ENCODE measurements at regions of chr2 and their contacts with region 1.

Region 1: GRCh38 chr2:27133905-27134780 is at the start of gene PREB:
- DNase-seq: peak; percentile 91
- ATAC-seq: peak; percentile 83
- H3K4me3 ChIP-seq: peak within 1 kb of the TSS; percentile 92 to 100 (median 96)
- H3K27ac ChIP-seq: peak within 1 kb of the TSS; percentile 72
- H3K4me1 ChIP-seq: peaks cover 52% of the 10 kb centered on the region
- H3K27me3 ChIP-seq: peaks cover 6 to 14% of the 10 kb centered on the region in 2 experiments; a peak in 3 of 5 replicates
- CTCF ChIP-seq: peak; percentile 34
- EP300 ChIP-seq: 0 out of 4 replicates have a peak, but pooled peaks have one; percentile 7 to 26
- POLR2A ChIP-seq: peak; percentile 85 to 97
- RAD21 ChIP-seq: peak; percentile 55
- total RNA-seq, gene PREB: 112 and 119 TPM in 2 replicates

Region 2: DNA sequence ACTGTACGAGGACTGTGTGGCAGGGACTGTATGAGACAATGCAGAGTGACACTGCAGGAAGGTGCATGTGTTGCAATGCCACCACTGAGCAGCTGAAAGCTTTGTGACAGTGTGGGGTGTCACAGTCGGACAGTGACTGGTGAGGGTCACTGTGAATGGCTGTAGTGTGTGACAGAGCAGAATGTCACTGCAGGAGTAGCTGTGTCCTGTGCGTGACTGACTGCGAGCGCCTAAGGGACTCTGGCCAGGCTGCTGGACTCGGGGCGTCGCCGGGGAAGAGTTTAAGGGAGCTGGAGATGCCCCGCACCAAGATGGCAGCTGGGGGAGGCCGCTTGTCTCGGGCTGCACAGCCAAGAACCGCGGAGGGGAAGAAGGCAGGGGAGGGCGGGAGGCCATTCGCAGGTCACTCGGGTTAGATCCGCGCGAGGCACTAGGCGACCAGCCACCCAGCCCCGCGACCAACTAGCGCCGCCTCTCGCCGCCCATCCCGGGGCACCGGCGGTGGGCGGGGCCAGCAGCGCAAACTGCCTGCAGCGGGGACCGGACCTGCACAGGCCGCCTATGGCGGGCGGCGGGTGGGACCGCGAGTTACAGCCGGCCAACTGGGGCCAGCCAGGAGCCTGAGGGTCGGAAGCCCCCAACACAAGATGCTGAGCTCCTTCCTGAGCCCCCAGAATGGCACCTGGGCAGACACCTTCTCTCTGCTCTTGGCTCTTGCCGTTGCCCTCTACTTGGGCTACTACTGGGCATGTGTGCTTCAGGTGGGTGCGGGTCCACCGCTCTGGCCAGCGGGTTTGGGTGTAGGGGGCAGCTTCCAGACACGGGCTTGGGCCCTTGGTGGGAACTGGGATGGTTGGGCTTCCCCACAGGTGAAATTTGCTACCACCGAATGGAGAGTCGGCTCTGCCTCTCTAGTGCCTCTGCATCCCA is 10.6 kb before region 1 on chr2 and contains the start of gene ABHD1:
- CTCF ChIA-PET with region 1: no interaction called
- POLR2A ChIA-PET with region 1: interaction called, 76 read pairs
- in situ Hi-C with region 1: no loop called
- intact Hi-C with region 1: loop called (anchors 1 kb)
- DNase-seq: peak; percentile 59
- ATAC-seq: peak; percentile 78
- H3K4me3 ChIP-seq: peak within 1 kb of the TSS; percentile 46 to 80 (median 62)
- H3K27ac ChIP-seq: no peak within 1 kb of the TSS
- H3K4me1 ChIP-seq: peaks cover 60% of the 10 kb centered on the region
- H3K27me3 ChIP-seq: peaks cover 2 to 42% of the 10 kb centered on the region in 2 experiments; a peak in 4 of 5 replicates
- CTCF ChIP-seq: peak; percentile 73
- EP300 ChIP-seq: no peak
- POLR2A ChIP-seq: peak; percentile 27 to 90
- RAD21 ChIP-seq: 0 out of 2 replicates have a peak, but pooled peaks have one; percentile 45
- total RNA-seq, gene ABHD1: 0.04 TPM in 1 of 2 replicates, not detected in the other

Region 3: GRCh38 chr2:27152786-27153510 is 18.8 kb after region 1 on chr2:
- CTCF ChIA-PET with region 1: no interaction called
- POLR2A ChIA-PET with region 1: interaction called, 13 read pairs
- in situ Hi-C with region 1: no loop called
- intact Hi-C with region 1: no loop called
- DNase-seq: no peak
- ATAC-seq: no peak
- H3K4me3 ChIP-seq: no peak overlapping the region
- H3K27ac ChIP-seq: no peak overlapping the region
- H3K4me1 ChIP-seq: peaks cover 69% of the 10 kb centered on the region
- H3K27me3 ChIP-seq: peaks cover 0 to 2% of the 10 kb centered on the region in 2 experiments; a peak in 2 of 5 replicates
- CTCF ChIP-seq: no peak
- EP300 ChIP-seq: no peak
- POLR2A ChIP-seq: no peak
- RAD21 ChIP-seq: no peak

Region 4: GRCh38 chr2:27174316-27175040 is 40.3 kb after region 1 on chr2:
- CTCF ChIA-PET with region 1: no interaction called
- POLR2A ChIA-PET with region 1: interaction called, 19 read pairs
- in situ Hi-C with region 1: no loop called
- intact Hi-C with region 1: no loop called
- DNase-seq: no peak
- ATAC-seq: no peak
- H3K4me3 ChIP-seq: no peak overlapping the region
- H3K27ac ChIP-seq: peak overlapping the region; percentile 43
- H3K4me1 ChIP-seq: peaks cover 98% of the 10 kb centered on the region
- H3K27me3 ChIP-seq: no peaks in the 10 kb centered on the region
- CTCF ChIP-seq: no peak
- EP300 ChIP-seq: no peak
- POLR2A ChIP-seq: no peak
- RAD21 ChIP-seq: no peak

Region 5: DNA sequence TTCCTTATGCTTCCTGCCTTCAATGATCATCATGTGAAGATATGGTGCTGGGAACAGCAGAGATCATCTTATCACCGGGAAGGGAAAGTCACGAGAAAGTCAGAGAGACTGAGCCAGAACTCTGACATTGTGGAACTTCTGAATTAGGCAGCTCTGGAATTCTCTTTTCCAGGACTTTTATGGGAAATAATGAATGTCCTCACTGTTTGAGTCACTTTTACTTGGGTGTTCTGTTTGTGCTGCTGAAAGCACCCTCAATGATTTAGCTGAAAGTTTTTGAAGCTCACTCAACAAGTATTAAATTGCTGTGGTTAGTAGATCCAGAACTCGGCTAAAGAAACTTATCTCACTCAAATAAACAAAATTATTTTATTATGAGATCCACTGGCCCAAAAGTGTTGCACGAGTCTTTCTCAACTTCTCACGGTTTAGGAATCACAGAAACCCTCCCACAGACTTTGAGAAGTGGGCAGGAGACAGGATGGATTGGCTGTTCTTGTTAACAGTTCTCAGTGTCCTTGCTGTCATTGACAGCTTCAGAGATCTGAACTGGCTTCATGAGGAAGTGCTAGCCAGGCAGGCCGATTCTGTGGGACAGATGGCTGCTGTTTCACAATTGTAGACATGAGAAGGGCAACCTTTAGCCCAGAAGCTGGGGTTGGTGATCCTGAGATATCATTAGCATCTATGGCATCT is 51.3 kb after region 1 on chr2:
- CTCF ChIA-PET with region 1: interaction called, 10 read pairs
- POLR2A ChIA-PET with region 1: interaction called, 13 read pairs
- in situ Hi-C with region 1: no loop called
- intact Hi-C with region 1: loop called (anchors 2 kb)
- DNase-seq: peak; percentile 86
- ATAC-seq: peak; percentile 89
- H3K4me3 ChIP-seq: no peak overlapping the region
- H3K27ac ChIP-seq: peak overlapping the region; percentile 63
- H3K4me1 ChIP-seq: peaks cover 66% of the 10 kb centered on the region
- H3K27me3 ChIP-seq: no peaks in the 10 kb centered on the region
- CTCF ChIP-seq: no peak
- EP300 ChIP-seq: peak in 1 of 2 experiments; percentile 38; a peak in 1 of 4 replicates
- POLR2A ChIP-seq: no peak; a peak in 1 of 4 replicates
- RAD21 ChIP-seq: no peak; the same call in 1 of the 2 replicates

Region 6: DNA sequence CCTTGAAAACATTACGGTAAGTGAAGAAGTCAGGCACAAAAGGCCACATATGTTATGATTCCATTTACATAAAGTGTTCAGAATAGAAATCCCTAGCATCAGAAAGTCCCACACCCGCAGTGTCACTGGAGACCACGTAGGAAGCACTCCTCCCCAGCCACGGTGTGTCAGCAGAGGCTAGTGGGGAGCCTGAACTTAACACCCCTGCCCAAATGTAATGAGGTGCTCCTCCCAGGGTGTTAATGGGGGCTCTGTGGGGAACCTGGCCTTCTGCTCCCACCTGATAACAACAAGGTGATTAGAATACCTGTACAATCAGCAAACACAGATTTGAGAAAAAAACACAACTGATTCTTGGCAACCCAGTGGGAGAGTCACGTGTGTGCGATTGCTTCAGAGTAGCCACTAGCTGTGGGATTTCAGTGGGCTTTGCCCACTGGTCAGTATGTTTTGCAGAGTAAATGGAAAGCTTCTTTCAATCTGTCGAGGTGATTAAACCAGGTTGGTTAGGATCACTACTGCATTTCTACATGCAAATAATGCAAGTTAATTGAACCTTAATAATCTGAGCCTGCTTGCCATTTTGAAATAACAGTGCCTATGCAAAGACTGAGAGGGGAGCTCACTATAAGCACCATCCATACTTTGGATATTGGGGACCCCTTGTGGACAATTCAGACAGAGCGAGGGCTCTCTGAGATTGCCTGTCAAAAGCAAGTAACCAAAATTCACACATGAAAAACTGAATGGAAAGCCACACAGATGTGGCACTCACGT is 57.1 kb after region 1 on chr2:
- CTCF ChIA-PET with region 1: interaction called, 10 read pairs
- POLR2A ChIA-PET with region 1: interaction called, 12 read pairs
- in situ Hi-C with region 1: no loop called
- intact Hi-C with region 1: loop called (anchors 2 kb)
- DNase-seq: peak; percentile 87
- ATAC-seq: peak; percentile 93
- H3K4me3 ChIP-seq: no peak overlapping the region
- H3K27ac ChIP-seq: peak overlapping the region; percentile 7
- H3K4me1 ChIP-seq: peaks cover 43% of the 10 kb centered on the region
- H3K27me3 ChIP-seq: no peaks in the 10 kb centered on the region
- CTCF ChIP-seq: peak; percentile 93
- EP300 ChIP-seq: peak in 1 of 2 experiments; percentile 25; a peak in 1 of 4 replicates
- POLR2A ChIP-seq: no peak
- RAD21 ChIP-seq: peak; percentile 97

Region 7: DNA sequence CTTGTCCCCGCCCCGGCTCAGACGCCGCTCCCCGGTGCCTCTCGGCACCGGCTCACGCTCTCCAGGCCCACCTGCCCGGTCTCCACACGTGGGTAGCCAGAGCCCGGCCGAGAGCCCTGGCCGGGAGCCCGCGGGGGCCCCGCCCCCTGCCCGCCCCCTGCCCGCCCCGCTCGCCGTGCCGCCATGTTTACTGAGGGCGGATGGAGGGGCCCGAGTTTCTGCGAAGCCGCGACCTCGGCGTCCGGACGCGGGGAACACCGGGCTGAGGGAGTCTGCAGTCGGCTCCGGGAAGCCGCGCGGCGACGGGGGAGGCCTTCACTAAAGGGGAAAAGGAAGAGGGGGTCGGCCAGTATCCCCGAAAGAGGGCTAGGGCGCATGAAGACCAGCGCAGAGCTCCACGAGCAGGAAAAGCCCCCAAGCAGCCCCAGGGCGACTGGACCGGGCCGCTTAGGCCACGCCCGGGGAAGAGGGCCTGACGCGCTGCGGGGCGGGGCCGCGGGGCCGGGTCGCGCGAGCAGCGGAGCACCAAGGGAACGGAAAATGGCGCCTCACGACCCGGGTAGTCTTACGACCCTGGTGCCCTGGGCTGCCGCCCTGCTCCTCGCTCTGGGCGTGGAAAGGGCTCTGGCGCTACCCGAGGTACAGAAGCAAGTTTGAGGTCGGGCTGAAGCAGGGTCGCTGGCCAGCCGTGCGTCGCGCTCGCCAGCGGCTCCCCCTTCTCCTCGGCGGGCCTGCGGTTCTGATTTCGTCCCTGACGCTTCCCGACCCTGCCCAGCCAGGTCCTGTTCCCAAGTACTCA is 77.9 kb after region 1 on chr2 and contains the starts of genes ATRAID and SLC5A6:
- CTCF ChIA-PET with region 1: no interaction called
- POLR2A ChIA-PET with region 1: interaction called, 10 read pairs
- in situ Hi-C with region 1: no loop called
- intact Hi-C with region 1: no loop called
- DNase-seq: peak; percentile 82
- ATAC-seq: peak; percentile 91
- H3K4me3 ChIP-seq: peak within 1 kb of the TSS; percentile 87 to 93 (median 89)
- H3K27ac ChIP-seq: peak within 1 kb of the TSS; percentile 97
- H3K4me1 ChIP-seq: peaks cover 67% of the 10 kb centered on the region
- H3K27me3 ChIP-seq: no peaks in the 10 kb centered on the region; a peak in 1 of 5 replicates
- CTCF ChIP-seq: no peak; the same call in 1 of the 2 replicates
- EP300 ChIP-seq: peak in 1 of 2 experiments; percentile 11; a peak in 1 of 4 replicates
- POLR2A ChIP-seq: peak; percentile 95 to 98
- RAD21 ChIP-seq: peak; percentile 71
- total RNA-seq, gene ATRAID: 130 and 207 TPM in 2 replicates
- total RNA-seq, gene SLC5A6: 73.9 and 135 TPM in 2 replicates

Measured in HepG2 (cell line).